ENCODE measurements at regions of chr9 and their contacts with region 1.

Region 1: GRCh38 chr9:27688954-27689353 is 115.7 kb upstream of the C9orf72 start:
- DNase-seq: no peak
- CTCF ChIP-seq: no peak

Region 2: DNA sequence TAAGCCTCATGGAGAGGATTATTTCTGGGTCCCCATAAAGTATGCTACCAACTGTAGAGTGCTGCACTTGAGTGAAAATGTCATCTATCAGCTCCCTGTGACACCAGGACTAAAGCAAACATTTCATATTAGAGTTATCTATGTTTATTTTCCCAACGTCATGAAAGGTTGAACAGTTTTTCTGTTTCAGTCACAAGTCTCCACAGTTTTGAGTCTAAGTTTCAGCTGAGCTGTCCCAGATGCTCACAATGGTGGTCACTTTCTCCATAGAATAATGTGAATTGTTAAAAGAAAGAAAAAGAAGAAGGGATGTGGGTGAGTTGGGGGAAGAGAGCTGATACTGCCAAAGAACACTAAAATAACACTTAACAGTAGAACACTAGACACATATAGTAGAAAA is 10.7 kb after region 1 on chr9:
- CTCF ChIA-PET with region 1: interaction called, 10 read pairs
- POLR2A ChIA-PET with region 1: no interaction called
- DNase-seq: no peak
- CTCF ChIP-seq: no peak

Region 3: GRCh38 chr9:27799326-27799725 is 110.4 kb after region 1 on chr9:
- CTCF ChIA-PET with region 1: no interaction called
- POLR2A ChIA-PET with region 1: no interaction called
- DNase-seq: no peak
- CTCF ChIP-seq: no peak

Region 4: DNA sequence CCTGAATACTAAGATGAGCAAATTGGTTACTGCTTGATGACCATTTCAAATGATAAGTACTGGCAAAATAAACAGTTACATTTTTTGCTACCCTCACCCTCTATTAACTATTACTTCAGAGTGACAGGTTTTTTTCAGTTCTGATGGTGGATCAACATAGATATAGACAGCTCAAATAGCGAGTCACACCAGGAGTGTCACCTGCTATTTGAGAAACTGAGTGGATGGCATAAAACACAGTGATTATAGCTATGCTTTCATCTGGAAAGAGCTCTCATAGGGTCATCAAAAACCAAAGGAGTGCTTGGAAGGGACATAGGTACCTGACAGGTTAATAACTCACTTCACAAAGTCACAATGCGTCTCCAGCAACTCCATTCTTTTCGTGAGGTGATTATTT is 128.8 kb after region 1 on chr9:
- CTCF ChIA-PET with region 1: no interaction called
- POLR2A ChIA-PET with region 1: no interaction called
- DNase-seq: no peak
- CTCF ChIP-seq: no peak